ENCODE measurements at regions of chr12 and their contacts with region 1.

Region 1: GRCh38 chr12:32627976-32628375 is 51.1 kb upstream of the DNM1L start:
- DNase-seq: no peak
- H3K4me3 ChIP-seq: no peak overlapping the region
- H3K27ac ChIP-seq: no peak overlapping the region
- H3K4me1 ChIP-seq: no peaks in the 10 kb centered on the region
- H3K27me3 ChIP-seq: no peaks in the 10 kb centered on the region
- CTCF ChIP-seq: no peak
- EP300 ChIP-seq: no peak
- POLR2A ChIP-seq: no peak

Region 2: DNA sequence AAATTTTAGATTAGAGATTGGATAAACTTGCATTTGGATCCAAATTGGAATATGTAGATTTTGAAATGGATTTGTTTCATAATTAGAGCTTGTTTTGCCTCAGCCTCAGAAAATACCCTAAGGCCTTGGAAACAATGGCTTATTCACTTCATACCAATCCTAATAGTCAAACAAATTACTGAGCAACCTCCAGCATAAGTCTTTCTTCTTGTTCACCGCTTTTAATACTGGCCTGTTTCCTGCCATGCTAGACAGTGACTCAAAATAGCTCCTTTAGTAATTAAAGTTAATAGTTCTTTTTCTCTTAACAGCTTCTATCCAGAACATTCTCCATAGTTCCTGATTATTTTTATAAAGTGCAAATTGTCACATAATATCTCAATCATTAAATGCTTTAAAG is 59.7 kb before region 1 on chr12:
- intact Hi-C with region 1: loop called (anchors 10 kb)
- DNase-seq: no peak
- H3K4me3 ChIP-seq: no peak overlapping the region
- H3K27ac ChIP-seq: peak overlapping the region; percentile 2 to 40 (median 23)
- H3K4me1 ChIP-seq: peaks cover 21 to 40% (median 35%) of the 10 kb centered on the region in 4 donors
- H3K27me3 ChIP-seq: no peaks in the 10 kb centered on the region
- CTCF ChIP-seq: no peak
- EP300 ChIP-seq: no peak
- POLR2A ChIP-seq: no peak

Region 3: DNA sequence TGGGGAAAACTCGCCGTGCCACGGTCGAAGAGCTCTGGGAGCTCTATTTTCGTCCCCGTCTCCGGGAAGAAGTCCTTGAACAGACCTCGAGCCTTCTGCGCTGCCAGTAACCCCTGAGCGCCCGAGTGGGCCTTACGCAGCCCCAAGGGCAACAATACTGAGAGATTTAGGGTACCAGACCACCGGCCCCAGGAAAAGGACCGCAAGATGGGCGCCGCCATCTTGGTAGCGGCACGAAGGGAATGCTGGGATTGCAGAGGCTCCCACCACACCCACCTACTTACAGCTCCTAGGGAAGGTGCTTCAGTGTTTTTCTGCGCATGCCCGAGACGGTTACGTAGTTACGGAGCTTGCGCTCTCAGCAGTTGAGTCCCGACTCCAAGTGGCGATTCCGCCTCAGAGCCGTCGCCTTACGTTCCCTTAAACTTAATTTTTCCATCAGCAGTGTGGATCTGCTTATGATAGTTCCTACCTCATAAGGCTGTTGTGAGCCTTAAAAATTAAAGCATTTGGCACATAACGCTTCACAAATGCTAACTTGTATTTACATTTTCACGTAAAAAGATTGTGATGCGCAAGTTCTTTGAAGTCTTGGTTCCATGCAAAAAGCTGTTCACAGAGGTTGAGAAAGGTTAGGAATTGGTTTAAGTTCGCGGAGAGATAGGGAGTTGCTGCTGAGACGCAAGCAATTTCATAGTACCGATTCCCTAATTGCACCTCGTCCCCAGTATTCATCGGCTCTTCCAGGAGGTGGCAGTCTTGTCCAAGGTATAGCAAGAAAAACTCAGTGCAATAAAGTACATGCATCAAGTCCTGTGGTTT is 127.9 kb after region 1 on chr12 and contains the start of gene YARS2:
- intact Hi-C with region 1: no loop called
- DNase-seq: peak; percentile 96
- H3K4me3 ChIP-seq: peak within 1 kb of the TSS; percentile 92 to 97 (median 94)
- H3K27ac ChIP-seq: peak within 1 kb of the TSS; percentile 84 to 89 (median 88)
- H3K4me1 ChIP-seq: peaks cover 11 to 24% (median 21%) of the 10 kb centered on the region in 4 donors
- H3K27me3 ChIP-seq: peaks cover 0 to 1% (median 0%) of the 10 kb centered on the region in 4 donors
- CTCF ChIP-seq: peak; percentile 73 to 84 (median 79)
- EP300 ChIP-seq: no peak
- POLR2A ChIP-seq: no peak
- total RNA-seq, gene YARS2: 12.3 to 15.0 (median 14.7) TPM

Measured in esophagus muscularis mucosa (tissue), 4 donors.